Naive thymus-derived CD8-positive, alpha-beta T cell (primary cell): ENCODE measurements at regions of chr20 and their contacts with region 1.

Region 1: GRCh38 chr20:1663917-1664316 is 6.3 kb upstream of the SIRPG start:
- DNase-seq: no peak
- ATAC-seq: peak in 1 of 2 donors; percentile 18
- H3K4me3 Mint-ChIP-seq: peak overlapping the region; percentile 66 to 99 (median 82)
- H3K27ac Mint-ChIP-seq: peak overlapping the region; percentile 75 to 99 (median 93)
- H3K4me1 Mint-ChIP-seq: peaks cover 59 to 98% (median 97%) of the 10 kb centered on the region in 4 donors
- H3K27me3 Mint-ChIP-seq: no peaks in the 10 kb centered on the region

Region 2: DNA sequence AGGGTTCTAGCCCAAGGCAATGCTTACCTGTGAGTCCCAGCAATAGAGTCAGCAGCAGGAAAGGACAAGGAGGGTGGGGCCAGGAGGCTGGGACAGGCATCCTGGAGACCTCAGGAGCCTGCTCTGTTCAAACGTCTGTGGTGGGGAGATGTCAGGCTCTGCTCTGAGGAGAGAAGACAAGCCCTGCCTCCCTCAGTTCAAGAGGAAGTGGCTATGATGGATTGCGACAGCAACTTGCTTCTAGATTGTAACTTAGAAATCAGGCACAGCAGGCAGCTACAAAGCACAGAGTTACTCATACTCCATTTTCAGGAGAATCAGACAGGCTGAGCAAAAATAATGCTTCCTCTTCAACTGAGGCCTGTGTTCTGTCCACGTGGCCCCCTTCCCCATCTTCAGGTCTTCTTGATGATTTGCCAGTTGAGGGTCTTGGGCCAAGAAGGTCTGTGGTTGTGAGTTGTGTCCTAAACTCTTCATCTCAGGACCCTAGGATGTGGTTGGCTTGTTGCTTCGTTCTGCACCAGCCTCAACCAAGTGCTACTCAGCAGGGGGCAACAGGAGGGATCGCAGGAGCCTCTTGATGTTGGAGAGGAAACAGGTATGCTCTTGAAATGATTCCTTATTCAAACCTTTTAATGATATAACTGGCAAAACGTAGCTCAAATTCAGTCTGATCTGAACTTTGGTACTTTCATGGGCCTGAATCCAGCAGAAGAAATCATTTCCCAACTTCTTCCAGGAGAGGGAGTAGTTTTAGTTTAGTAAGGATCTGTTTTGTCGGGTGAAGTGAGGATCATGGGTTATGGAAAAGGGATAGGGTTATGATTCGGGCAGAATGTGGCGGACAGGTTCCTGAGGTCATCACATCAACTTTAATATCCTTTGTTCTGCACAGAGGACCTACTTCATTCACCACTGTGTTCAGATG is 75.1 kb before region 1 on chr20:
- POLR2A ChIA-PET with region 1: no interaction called
- DNase-seq: peak in 4 of 10 donors; percentile 47 to 65 (median 53)
- ATAC-seq: peak in 1 of 2 donors; percentile 91
- H3K4me3 Mint-ChIP-seq: peak overlapping the region in 4 of 10 donors; percentile 55 to 73 (median 62)
- H3K27ac Mint-ChIP-seq: peak overlapping the region in 3 of 10 donors; percentile 92 to 94 (median 92)
- H3K4me1 Mint-ChIP-seq: peaks cover 0 to 29% (median 0%) of the 10 kb centered on the region in 4 donors
- H3K27me3 Mint-ChIP-seq: no peaks in the 10 kb centered on the region

Region 3: GRCh38 chr20:1651268-1652058 is 12.5 kb before region 1 on chr20:
- POLR2A ChIA-PET with region 1: interaction called, 19 read pairs
- DNase-seq: no peak
- ATAC-seq: peak; percentile 29 to 30
- H3K4me3 Mint-ChIP-seq: peak overlapping the region; percentile 2 to 83 (median 76)
- H3K27ac Mint-ChIP-seq: peak overlapping the region; percentile 72 to 95 (median 90)
- H3K4me1 Mint-ChIP-seq: peaks cover 45 to 85% (median 79%) of the 10 kb centered on the region in 4 donors
- H3K27me3 Mint-ChIP-seq: no peaks in the 10 kb centered on the region